ENCODE measurements at regions of chr10 and their contacts with region 1.

Region 1: GRCh38 chr10:74189999-74190421 is 39.0 kb downstream of the ADK start:
- DNase-seq: peak in 6 of 9 donors; percentile 34 to 51 (median 42)
- ATAC-seq: peak; percentile 75
- H3K4me3 ChIP-seq: peak overlapping the region; percentile 15
- H3K4me3 Mint-ChIP-seq: peak overlapping the region; percentile 60 to 83 (median 70)
- H3K27ac ChIP-seq: peak overlapping the region; percentile 62
- H3K27ac Mint-ChIP-seq: peak overlapping the region; percentile 86 to 97 (median 95)
- H3K4me1 ChIP-seq: peaks cover 21 to 27% of the 10 kb centered on the region in 2 donors
- H3K4me1 Mint-ChIP-seq: peaks cover 28 to 76% (median 66%) of the 10 kb centered on the region in 7 donors
- H3K27me3 ChIP-seq: no peaks in the 10 kb centered on the region
- H3K27me3 Mint-ChIP-seq: no peaks in the 10 kb centered on the region

Region 2: GRCh38 chr10:74213571-74214162 is 23.7 kb after region 1 on chr10:
- CTCF ChIA-PET with region 1: interaction called, 23 read pairs
- POLR2A ChIA-PET with region 1: interaction called, 3 read pairs
- intact Hi-C with region 1: loop called in 1 of 2 experiments (anchors 1 kb)
- DNase-seq: peak in 7 of 9 donors; percentile 26 to 60 (median 42)
- ATAC-seq: peak; percentile 78
- H3K4me3 ChIP-seq: no peak overlapping the region
- H3K4me3 Mint-ChIP-seq: no peak overlapping the region
- H3K27ac ChIP-seq: no peak overlapping the region
- H3K27ac Mint-ChIP-seq: peak overlapping the region in 1 of 9 donors; percentile 0
- H3K4me1 ChIP-seq: no peaks in the 10 kb centered on the region
- H3K4me1 Mint-ChIP-seq: peaks cover 7 to 16% (median 12%) of the 10 kb centered on the region in 7 donors
- H3K27me3 ChIP-seq: no peaks in the 10 kb centered on the region
- H3K27me3 Mint-ChIP-seq: no peaks in the 10 kb centered on the region

Region 3: GRCh38 chr10:74227697-74228424 is 37.9 kb after region 1 on chr10:
- CTCF ChIA-PET with region 1: no interaction called
- POLR2A ChIA-PET with region 1: no interaction called
- intact Hi-C with region 1: loop called in 1 of 2 experiments (anchors 5 kb)
- DNase-seq: peak in 4 of 9 donors; percentile 18 to 37 (median 22)
- ATAC-seq: peak; percentile 82
- H3K4me3 ChIP-seq: no peak overlapping the region
- H3K4me3 Mint-ChIP-seq: peak overlapping the region in 9 of 10 donors; percentile 55 to 78 (median 69)
- H3K27ac ChIP-seq: peak overlapping the region; percentile 58
- H3K27ac Mint-ChIP-seq: peak overlapping the region; percentile 70 to 95 (median 89)
- H3K4me1 ChIP-seq: peaks cover 8 to 18% of the 10 kb centered on the region in 2 donors
- H3K4me1 Mint-ChIP-seq: peaks cover 9 to 40% (median 19%) of the 10 kb centered on the region in 7 donors
- H3K27me3 ChIP-seq: no peaks in the 10 kb centered on the region
- H3K27me3 Mint-ChIP-seq: no peaks in the 10 kb centered on the region

Measured in naive thymus-derived CD4-positive, alpha-beta T cell (primary cell).